Psoas muscle (tissue), 8 donors: ENCODE measurements at regions of chr21 and their contacts with region 1.

Region 1: GRCh38 chr21:37176711-37177110 is 90.4 kb downstream of the VPS26C start:
- DNase-seq: no peak
- ATAC-seq: peak in 1 of 4 donors; percentile 25
- H3K4me3 ChIP-seq: no peak overlapping the region
- H3K27ac ChIP-seq: peak overlapping the region; percentile 14
- H3K4me1 ChIP-seq: peaks cover 6% of the 10 kb centered on the region
- H3K27me3 ChIP-seq: no peaks in the 10 kb centered on the region
- CTCF ChIP-seq: no peak

Region 2: GRCh38 chr21:37106998-37107397 is 69.7 kb before region 1 on chr21:
- intact Hi-C with region 1: no loop called
- DNase-seq: no peak
- ATAC-seq: no peak
- H3K4me3 ChIP-seq: no peak overlapping the region
- H3K27ac ChIP-seq: no peak overlapping the region
- H3K4me1 ChIP-seq: no peaks in the 10 kb centered on the region
- H3K27me3 ChIP-seq: no peaks in the 10 kb centered on the region
- CTCF ChIP-seq: no peak

Region 3: GRCh38 chr21:37208056-37208721 is 31.5 kb after region 1 on chr21:
- intact Hi-C with region 1: loop called in 1 of 2 experiments (anchors 5 kb)
- DNase-seq: peak; percentile 80 to 92
- ATAC-seq: peak; percentile 82 to 91 (median 84)
- H3K4me3 ChIP-seq: peak overlapping the region; percentile 58
- H3K27ac ChIP-seq: peak overlapping the region; percentile 94
- H3K4me1 ChIP-seq: peaks cover 13% of the 10 kb centered on the region
- H3K27me3 ChIP-seq: no peaks in the 10 kb centered on the region
- CTCF ChIP-seq: no peak

Region 4: GRCh38 chr21:37463083-37463801 is 286.5 kb after region 1 on chr21:
- intact Hi-C with region 1: loop called in 1 of 2 experiments (anchors 10 kb)
- DNase-seq: no peak
- ATAC-seq: peak; percentile 53 to 62 (median 58)
- H3K4me3 ChIP-seq: peak overlapping the region; percentile 30
- H3K27ac ChIP-seq: peak overlapping the region; percentile 61
- H3K4me1 ChIP-seq: peaks cover 64% of the 10 kb centered on the region
- H3K27me3 ChIP-seq: no peaks in the 10 kb centered on the region
- CTCF ChIP-seq: peak; percentile 52

Region 5: DNA sequence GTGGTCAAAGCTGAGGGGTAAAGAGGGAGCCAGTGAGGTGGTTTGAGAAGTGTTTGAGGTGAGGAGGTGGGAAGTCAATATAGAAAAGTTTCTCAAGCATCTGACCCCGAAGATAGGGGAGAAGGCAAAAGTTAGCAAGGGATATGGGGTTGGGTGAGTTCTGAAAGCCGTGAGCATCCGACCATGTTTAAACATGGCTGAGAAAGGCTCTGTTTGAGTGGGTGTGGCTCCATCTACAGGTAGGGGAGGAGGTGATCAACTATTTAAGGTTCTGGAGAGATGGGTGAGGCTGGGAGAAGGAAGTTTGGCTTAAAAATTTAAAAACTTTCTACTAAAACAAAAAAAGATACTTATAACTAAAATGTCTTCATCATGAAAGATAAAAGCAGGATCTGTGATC is 465.8 kb after region 1 on chr21:
- intact Hi-C with region 1: loop called in 1 of 2 experiments (anchors 10 kb)
- DNase-seq: no peak
- ATAC-seq: peak; percentile 71 to 92 (median 82)
- H3K4me3 ChIP-seq: no peak overlapping the region
- H3K27ac ChIP-seq: no peak overlapping the region
- H3K4me1 ChIP-seq: no peaks in the 10 kb centered on the region
- H3K27me3 ChIP-seq: no peaks in the 10 kb centered on the region
- CTCF ChIP-seq: peak; percentile 41